Common myeloid progenitor, CD34-positive (primary cell): ENCODE measurements at regions of chr7 and their contacts with region 1.

Region 1: GRCh38 chr7:48875045-48875916 is 49.1 kb upstream of the CDC14C start:
- DNase-seq: peak; percentile 40 to 65 (median 62)
- H3K4me3 ChIP-seq: no peak overlapping the region
- H3K27ac ChIP-seq: no peak overlapping the region
- H3K4me1 ChIP-seq: no peaks in the 10 kb centered on the region
- H3K27me3 ChIP-seq: peaks cover 0 to 3% (median 0%) of the 10 kb centered on the region in 5 experiments

Region 2: DNA sequence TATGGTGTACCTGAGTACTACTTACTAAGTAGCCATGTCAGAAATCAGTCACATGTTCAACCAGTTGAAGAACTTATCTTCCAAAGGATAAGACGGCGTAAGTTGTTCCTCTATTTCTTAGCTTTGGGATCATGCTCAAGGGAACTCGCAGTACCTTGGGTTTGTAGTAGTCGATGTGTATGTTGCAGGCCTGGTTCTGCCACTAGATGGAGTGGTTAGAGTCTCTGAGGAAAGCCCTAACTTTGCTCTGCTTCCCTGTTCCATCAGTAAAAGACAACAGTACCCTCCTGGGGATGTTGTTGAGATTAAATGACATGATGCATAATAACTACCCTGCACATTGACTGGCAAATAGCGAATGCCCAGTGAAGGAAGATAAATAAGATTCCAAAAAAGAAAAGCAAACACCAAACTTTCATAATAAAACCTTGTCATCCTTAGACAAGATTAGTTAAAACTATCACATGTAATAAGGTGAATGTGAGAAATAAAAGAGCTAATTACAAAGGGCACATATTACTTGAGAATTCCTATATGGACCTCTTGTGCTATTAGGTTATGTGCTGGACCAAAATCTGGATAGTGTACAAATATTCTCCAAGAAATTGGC is 538.2 kb before region 1 on chr7:
- CTCF ChIA-PET with region 1: interaction called, 15 read pairs
- POLR2A ChIA-PET with region 1: no interaction called
- DNase-seq: peak; percentile 9 to 50 (median 37)
- H3K4me3 ChIP-seq: no peak overlapping the region
- H3K27ac ChIP-seq: no peak overlapping the region
- H3K4me1 ChIP-seq: no peaks in the 10 kb centered on the region
- H3K27me3 ChIP-seq: no peaks in the 10 kb centered on the region